CD4-positive, alpha-beta memory T cell (primary cell): ENCODE measurements at regions of chr13 and their contacts with region 1.

Region 1: GRCh38 chr13:76980075-76980718 is 11.7 kb upstream of the CLN5 start:
- DNase-seq: peak; percentile 72 to 83 (median 78)
- H3K4me3 ChIP-seq: no peak overlapping the region
- H3K4me3 Mint-ChIP-seq: peak overlapping the region in 6 of 8 donors; percentile 35 to 69 (median 54)
- H3K27ac ChIP-seq: no peak overlapping the region
- H3K27ac Mint-ChIP-seq: peak overlapping the region in 2 of 7 donors; percentile 29 to 48
- H3K4me1 ChIP-seq: peaks cover 20% of the 10 kb centered on the region
- H3K4me1 Mint-ChIP-seq: peaks cover 7 to 15% (median 10%) of the 10 kb centered on the region in 4 donors
- H3K27me3 ChIP-seq: no peaks in the 10 kb centered on the region
- H3K27me3 Mint-ChIP-seq: peaks cover 18% of the 10 kb centered on the region in 2 donors

Region 2: DNA sequence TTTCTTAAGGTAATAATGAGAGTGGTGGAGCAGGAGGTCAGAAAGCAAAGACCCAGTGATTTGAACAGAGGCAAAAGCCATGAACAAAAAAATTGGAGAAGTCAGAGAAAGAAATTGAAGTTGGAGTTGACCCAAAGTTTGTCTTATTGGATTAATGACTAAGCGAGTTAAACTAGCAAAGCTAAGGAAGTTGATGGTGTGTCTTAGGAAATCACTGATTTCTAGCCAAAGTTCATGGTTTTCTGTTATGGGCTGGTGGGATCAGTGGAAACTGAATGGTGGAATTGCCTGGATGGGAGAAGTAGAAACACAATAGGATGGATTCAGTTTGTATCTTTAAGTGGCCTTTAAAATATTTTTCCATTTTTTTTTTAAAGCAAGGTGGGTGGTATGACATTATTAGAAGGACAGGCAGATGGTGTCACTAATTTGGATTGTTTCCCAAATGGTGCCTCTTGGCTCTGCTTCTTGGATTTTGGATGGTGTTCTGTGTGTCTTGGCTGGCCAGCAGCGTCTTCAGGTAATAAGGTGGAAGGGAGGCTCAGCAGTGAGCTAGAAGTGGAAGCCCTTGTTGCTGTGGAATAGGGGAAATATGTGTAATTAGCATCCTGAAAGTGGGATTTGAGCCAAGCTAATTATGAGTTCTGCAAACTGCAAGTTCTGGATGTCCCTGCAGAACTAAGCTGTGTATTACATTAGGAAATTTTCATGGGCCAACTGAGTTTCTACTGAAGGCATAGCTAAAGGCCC is 1041.2 kb before region 1 on chr13:
- CTCF ChIA-PET with region 1: no interaction called
- POLR2A ChIA-PET with region 1: no interaction called
- intact Hi-C with region 1: no loop called
- DNase-seq: no peak
- H3K4me3 ChIP-seq: no peak overlapping the region
- H3K4me3 Mint-ChIP-seq: no peak overlapping the region
- H3K27ac ChIP-seq: no peak overlapping the region
- H3K27ac Mint-ChIP-seq: no peak overlapping the region
- H3K4me1 ChIP-seq: no peaks in the 10 kb centered on the region
- H3K4me1 Mint-ChIP-seq: no peaks in the 10 kb centered on the region
- H3K27me3 ChIP-seq: no peaks in the 10 kb centered on the region
- H3K27me3 Mint-ChIP-seq: peaks cover 3 to 4% of the 10 kb centered on the region in 2 donors

Region 3: DNA sequence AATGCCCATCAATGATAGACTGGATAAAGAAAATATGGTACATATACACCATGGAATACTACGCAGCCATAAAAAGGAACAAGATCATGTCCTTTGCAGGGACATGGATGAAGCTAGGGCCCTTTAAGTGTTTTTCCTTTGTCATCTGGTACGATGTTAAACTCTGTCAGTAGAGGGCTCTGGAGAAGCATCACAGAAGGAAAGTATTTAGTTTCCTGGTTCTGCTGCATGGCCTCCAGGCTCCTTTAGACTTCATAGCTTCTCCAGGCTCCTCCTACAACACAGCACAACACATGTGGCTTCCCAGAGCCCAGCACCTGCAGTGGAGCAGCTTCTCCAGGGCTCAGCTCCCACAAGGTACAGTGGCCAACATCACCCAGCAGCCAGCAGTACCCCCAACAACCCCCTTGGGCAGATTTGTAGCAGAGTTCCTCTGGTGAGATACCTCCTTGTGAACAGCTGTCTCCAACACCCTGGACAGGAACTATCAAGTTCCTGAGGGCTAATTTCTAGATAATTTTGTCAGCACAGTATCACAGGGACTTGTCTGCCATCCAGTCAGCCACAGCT is 157.4 kb before region 1 on chr13:
- CTCF ChIA-PET with region 1: interaction called, 3 read pairs
- POLR2A ChIA-PET with region 1: no interaction called
- intact Hi-C with region 1: loop called (anchors 1 kb)
- DNase-seq: peak in 3 of 5 donors; percentile 3 to 29 (median 15)
- H3K4me3 ChIP-seq: no peak overlapping the region
- H3K4me3 Mint-ChIP-seq: no peak overlapping the region
- H3K27ac ChIP-seq: no peak overlapping the region
- H3K27ac Mint-ChIP-seq: no peak overlapping the region
- H3K4me1 ChIP-seq: no peaks in the 10 kb centered on the region
- H3K4me1 Mint-ChIP-seq: no peaks in the 10 kb centered on the region
- H3K27me3 ChIP-seq: no peaks in the 10 kb centered on the region
- H3K27me3 Mint-ChIP-seq: peaks cover 4 to 9% of the 10 kb centered on the region in 2 donors

Region 4: GRCh38 chr13:77002590-77003190 is 22.5 kb after region 1 on chr13:
- CTCF ChIA-PET with region 1: interaction called, 22 read pairs
- POLR2A ChIA-PET with region 1: no interaction called
- intact Hi-C with region 1: no loop called
- DNase-seq: peak in 1 of 5 donors; percentile 19
- H3K4me3 ChIP-seq: no peak overlapping the region
- H3K4me3 Mint-ChIP-seq: no peak overlapping the region
- H3K27ac ChIP-seq: no peak overlapping the region
- H3K27ac Mint-ChIP-seq: peak overlapping the region; percentile 5 to 85 (median 30)
- H3K4me1 ChIP-seq: peaks cover 43% of the 10 kb centered on the region
- H3K4me1 Mint-ChIP-seq: peaks cover 25 to 44% (median 35%) of the 10 kb centered on the region in 4 donors
- H3K27me3 ChIP-seq: no peaks in the 10 kb centered on the region
- H3K27me3 Mint-ChIP-seq: no peaks in the 10 kb centered on the region

Region 5: GRCh38 chr13:77099415-77099814 is 119.2 kb after region 1 on chr13:
- CTCF ChIA-PET with region 1: no interaction called
- POLR2A ChIA-PET with region 1: no interaction called
- intact Hi-C with region 1: no loop called
- DNase-seq: no peak
- H3K4me3 ChIP-seq: no peak overlapping the region
- H3K4me3 Mint-ChIP-seq: no peak overlapping the region
- H3K27ac ChIP-seq: no peak overlapping the region
- H3K27ac Mint-ChIP-seq: no peak overlapping the region
- H3K4me1 ChIP-seq: no peaks in the 10 kb centered on the region
- H3K4me1 Mint-ChIP-seq: no peaks in the 10 kb centered on the region
- H3K27me3 ChIP-seq: no peaks in the 10 kb centered on the region
- H3K27me3 Mint-ChIP-seq: no peaks in the 10 kb centered on the region

Region 6: DNA sequence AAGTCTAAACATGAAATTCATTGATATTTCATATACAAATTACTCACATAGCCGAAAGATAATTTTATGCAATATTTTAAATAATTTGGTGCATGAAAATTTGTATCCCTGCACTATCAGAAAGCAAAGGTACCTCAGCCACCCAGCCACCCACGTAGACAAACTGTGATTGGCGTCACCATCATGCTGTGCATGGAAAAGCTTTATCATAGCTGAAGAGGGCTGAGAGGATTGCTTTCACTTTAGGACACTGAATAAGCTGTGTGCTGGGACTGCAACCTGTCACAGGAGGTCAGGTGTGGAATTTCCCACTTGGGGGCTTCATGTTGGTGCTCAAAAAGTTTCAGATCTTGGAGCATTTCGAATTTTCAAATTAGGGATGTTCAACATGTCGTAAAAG is 250.4 kb after region 1 on chr13:
- CTCF ChIA-PET with region 1: no interaction called
- POLR2A ChIA-PET with region 1: no interaction called
- intact Hi-C with region 1: no loop called
- DNase-seq: peak in 1 of 5 donors; percentile 31
- H3K4me3 ChIP-seq: no peak overlapping the region
- H3K4me3 Mint-ChIP-seq: peak overlapping the region in 1 of 8 donors; percentile 51
- H3K27ac ChIP-seq: no peak overlapping the region
- H3K27ac Mint-ChIP-seq: peak overlapping the region in 5 of 7 donors; percentile 13 to 79 (median 42)
- H3K4me1 ChIP-seq: peaks cover 11% of the 10 kb centered on the region
- H3K4me1 Mint-ChIP-seq: peaks cover 8 to 17% (median 15%) of the 10 kb centered on the region in 4 donors
- H3K27me3 ChIP-seq: no peaks in the 10 kb centered on the region
- H3K27me3 Mint-ChIP-seq: no peaks in the 10 kb centered on the region